Panc1 (cell line): ENCODE measurements at regions of chr15 and their contacts with region 1.

Region 1: GRCh38 chr15:90101969-90102890 is at the start of gene IDH2:
- DNase-seq: no peak
- ATAC-seq: peak; percentile 94
- H3K4me3 ChIP-seq: peak within 1 kb of the TSS; percentile 79 to 84
- H3K27ac ChIP-seq: peak within 1 kb of the TSS; percentile 91
- H3K4me1 ChIP-seq: peaks cover 70% of the 10 kb centered on the region
- H3K27me3 ChIP-seq: no peaks in the 10 kb centered on the region
- CTCF ChIP-seq: no peak
- total RNA-seq, gene IDH2: 197 TPM

Region 2: DNA sequence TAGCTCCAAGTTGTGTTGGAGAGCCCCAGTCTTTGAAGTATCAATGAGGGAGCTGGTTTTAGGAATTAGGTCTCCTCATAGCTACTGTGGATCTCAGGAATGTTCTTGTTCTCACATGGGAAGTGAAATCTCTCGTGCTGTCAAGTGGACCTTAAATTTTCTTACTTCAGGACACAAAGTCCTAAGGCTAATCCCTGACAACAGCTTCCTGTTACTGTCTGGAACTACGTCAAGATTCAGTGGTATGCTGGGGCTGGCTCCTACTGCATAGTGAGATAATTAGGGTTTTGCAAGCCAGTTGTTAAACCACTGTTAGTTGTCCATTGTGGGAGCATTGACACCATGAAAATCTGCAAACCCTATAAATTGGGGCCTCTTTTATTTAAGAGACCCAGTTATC is 374.0 kb before region 1 on chr15:
- CTCF ChIA-PET with region 1: no interaction called
- POLR2A ChIA-PET with region 1: no interaction called
- in situ Hi-C with region 1: no loop called
- intact Hi-C with region 1: no loop called
- DNase-seq: no peak
- ATAC-seq: no peak
- H3K4me3 ChIP-seq: no peak overlapping the region
- H3K27ac ChIP-seq: no peak overlapping the region
- H3K4me1 ChIP-seq: no peaks in the 10 kb centered on the region
- H3K27me3 ChIP-seq: no peaks in the 10 kb centered on the region
- CTCF ChIP-seq: no peak

Region 3: GRCh38 chr15:90031231-90031791 is 70.9 kb before region 1 on chr15:
- CTCF ChIA-PET with region 1: no interaction called
- POLR2A ChIA-PET with region 1: no interaction called
- in situ Hi-C with region 1: no loop called
- intact Hi-C with region 1: no loop called
- DNase-seq: no peak
- ATAC-seq: no peak
- H3K4me3 ChIP-seq: no peak overlapping the region
- H3K27ac ChIP-seq: no peak overlapping the region
- H3K4me1 ChIP-seq: peaks cover 24% of the 10 kb centered on the region
- H3K27me3 ChIP-seq: no peaks in the 10 kb centered on the region
- CTCF ChIP-seq: no peak

Region 4: GRCh38 chr15:90087454-90088154 is 14.6 kb before region 1 on chr15:
- CTCF ChIA-PET with region 1: no interaction called
- POLR2A ChIA-PET with region 1: interaction called, 16 read pairs
- in situ Hi-C with region 1: no loop called
- intact Hi-C with region 1: no loop called
- DNase-seq: no peak
- ATAC-seq: peak; percentile 72
- H3K4me3 ChIP-seq: no peak overlapping the region
- H3K27ac ChIP-seq: no peak overlapping the region
- H3K4me1 ChIP-seq: no peaks in the 10 kb centered on the region; the same call in 1 of the 2 replicates
- H3K27me3 ChIP-seq: no peaks in the 10 kb centered on the region
- CTCF ChIP-seq: no peak

Region 5: DNA sequence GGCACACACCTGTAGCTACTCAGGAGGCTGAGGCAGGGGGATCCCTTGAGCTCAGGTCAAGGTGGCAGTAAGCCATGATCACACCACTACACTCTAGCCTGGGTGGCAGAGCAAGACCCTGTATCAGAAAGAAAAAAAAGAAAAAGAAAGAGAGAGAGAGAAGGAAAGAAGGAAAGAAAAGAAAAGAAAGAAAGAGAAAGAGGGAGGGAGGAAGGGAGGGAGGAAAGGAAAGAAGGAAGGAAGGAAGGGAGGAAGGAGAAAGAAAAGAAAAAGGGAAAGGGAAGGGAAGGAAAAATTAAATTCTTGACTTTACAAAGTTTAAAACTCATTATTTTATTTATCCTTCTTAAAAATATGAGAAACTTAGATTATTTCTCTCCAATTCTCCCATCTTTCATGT is 17.1 kb after region 1 on chr15:
- CTCF ChIA-PET with region 1: interaction called, 18 read pairs
- POLR2A ChIA-PET with region 1: interaction called, 4 read pairs
- in situ Hi-C with region 1: no loop called
- intact Hi-C with region 1: no loop called
- DNase-seq: no peak
- ATAC-seq: no peak
- H3K4me3 ChIP-seq: no peak overlapping the region
- H3K27ac ChIP-seq: no peak overlapping the region
- H3K4me1 ChIP-seq: no peaks in the 10 kb centered on the region
- H3K27me3 ChIP-seq: no peaks in the 10 kb centered on the region
- CTCF ChIP-seq: no peak

Region 6: DNA sequence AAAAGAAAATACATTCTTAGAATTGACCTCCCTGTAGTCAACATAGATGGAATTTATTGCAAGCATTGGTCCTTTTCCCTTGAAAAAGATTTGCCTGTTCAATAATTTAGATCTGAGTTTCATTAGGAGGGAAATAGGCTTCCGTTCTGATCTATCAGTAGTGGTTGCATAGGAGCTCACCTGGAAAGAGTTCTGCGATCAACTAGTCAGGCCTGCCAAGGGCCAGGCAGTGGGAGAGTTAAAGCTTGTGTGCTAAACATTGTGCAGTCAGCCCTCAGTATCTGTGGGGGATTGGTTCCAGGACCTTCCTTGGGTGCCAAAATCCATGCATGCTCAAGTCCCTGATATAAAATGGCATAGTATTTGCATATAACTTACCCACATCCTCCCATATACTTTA is 29.6 kb after region 1 on chr15:
- CTCF ChIA-PET with region 1: no interaction called
- POLR2A ChIA-PET with region 1: no interaction called
- in situ Hi-C with region 1: no loop called
- intact Hi-C with region 1: no loop called
- DNase-seq: no peak
- ATAC-seq: no peak
- H3K4me3 ChIP-seq: no peak overlapping the region
- H3K27ac ChIP-seq: no peak overlapping the region
- H3K4me1 ChIP-seq: peaks cover 3% of the 10 kb centered on the region
- H3K27me3 ChIP-seq: no peaks in the 10 kb centered on the region
- CTCF ChIP-seq: no peak

Region 7: DNA sequence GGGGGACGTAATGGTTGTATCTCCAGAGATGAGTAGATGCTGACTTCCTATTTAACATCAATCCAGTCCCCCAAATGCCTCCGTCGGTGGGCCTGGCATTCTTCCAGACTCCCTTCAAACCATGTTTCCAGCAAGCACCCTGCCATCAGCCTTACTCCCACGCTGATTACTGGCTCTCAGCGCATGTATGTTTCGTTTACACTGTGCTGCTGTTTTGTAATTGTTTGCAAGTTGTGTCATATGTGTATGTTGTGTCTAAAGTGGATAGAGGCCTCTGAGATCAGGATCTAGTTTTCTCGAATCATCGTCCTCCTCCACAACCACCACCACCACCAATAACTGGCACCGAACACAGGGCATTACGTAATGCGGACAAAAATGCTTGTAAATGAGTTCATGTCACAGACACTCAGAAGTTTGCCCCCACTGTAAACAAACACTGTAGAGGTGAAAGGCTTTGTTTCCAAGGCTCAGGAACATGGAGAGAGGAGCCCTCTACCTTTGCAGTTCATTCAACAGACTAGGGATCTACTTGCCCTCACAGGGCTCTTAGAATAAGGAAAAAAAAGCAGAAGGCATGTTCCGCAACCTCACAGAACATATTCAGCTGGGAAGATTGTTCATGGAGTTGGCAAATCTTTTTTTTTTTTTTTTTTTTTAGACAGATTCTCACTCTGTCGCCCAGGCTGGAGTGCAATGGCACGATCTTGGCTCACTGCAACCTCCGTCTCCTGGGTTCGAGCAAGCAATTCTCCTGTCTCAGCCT is 52.8 kb after region 1 on chr15:
- CTCF ChIA-PET with region 1: no interaction called
- POLR2A ChIA-PET with region 1: no interaction called
- in situ Hi-C with region 1: no loop called
- intact Hi-C with region 1: no loop called
- DNase-seq: peak; percentile 62
- ATAC-seq: peak; percentile 46
- H3K4me3 ChIP-seq: no peak overlapping the region
- H3K27ac ChIP-seq: peak overlapping the region; percentile 79
- H3K4me1 ChIP-seq: peaks cover 45% of the 10 kb centered on the region
- H3K27me3 ChIP-seq: no peaks in the 10 kb centered on the region
- CTCF ChIP-seq: no peak

Region 8: DNA sequence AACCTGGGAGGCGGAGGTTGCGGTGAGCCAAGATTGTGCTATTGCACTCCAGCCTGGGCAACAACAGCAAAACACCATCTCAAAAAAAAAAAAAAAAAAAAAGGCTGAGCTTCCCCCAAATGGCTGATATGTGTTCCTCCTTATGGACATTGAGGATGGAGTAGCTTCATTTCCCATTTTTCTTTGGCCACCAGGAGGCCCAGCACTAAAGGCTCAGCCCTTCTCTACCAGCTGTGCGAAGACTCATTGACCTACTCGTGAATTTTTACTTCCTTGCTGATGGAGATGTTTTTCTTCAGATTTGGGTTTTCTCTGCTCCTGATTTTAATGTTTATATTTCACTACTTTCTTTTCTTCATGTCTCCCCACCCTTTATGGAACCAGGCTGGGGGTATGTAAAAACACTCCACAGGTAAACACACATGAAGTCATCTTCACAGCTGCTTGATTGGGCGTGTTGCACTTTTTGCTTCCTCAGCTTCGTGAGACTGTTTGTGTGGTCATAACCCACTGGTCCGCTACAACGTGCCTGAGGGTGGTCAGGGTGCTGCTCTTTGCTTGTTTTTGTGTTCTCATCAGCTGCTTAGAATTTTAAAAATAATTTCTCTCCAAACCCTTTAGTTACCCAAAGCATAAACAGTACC is 112.4 kb after region 1 on chr15:
- CTCF ChIA-PET with region 1: no interaction called
- POLR2A ChIA-PET with region 1: interaction called, 10 read pairs
- in situ Hi-C with region 1: no loop called
- intact Hi-C with region 1: no loop called
- DNase-seq: no peak
- ATAC-seq: no peak
- H3K4me3 ChIP-seq: no peak overlapping the region
- H3K27ac ChIP-seq: peak overlapping the region; percentile 100
- H3K4me1 ChIP-seq: peaks cover 96% of the 10 kb centered on the region
- H3K27me3 ChIP-seq: no peaks in the 10 kb centered on the region
- CTCF ChIP-seq: no peak